Panc1 (cell line): ENCODE measurements at regions of chr5 and their contacts with region 1.

Region 1: GRCh38 chr5:27290172-27290571 is 251.8 kb upstream of the CDH9 start:
- DNase-seq: no peak
- ATAC-seq: no peak
- H3K4me3 ChIP-seq: no peak overlapping the region
- H3K27ac ChIP-seq: no peak overlapping the region
- H3K4me1 ChIP-seq: no peaks in the 10 kb centered on the region
- H3K27me3 ChIP-seq: no peaks in the 10 kb centered on the region
- CTCF ChIP-seq: no peak

Region 2: DNA sequence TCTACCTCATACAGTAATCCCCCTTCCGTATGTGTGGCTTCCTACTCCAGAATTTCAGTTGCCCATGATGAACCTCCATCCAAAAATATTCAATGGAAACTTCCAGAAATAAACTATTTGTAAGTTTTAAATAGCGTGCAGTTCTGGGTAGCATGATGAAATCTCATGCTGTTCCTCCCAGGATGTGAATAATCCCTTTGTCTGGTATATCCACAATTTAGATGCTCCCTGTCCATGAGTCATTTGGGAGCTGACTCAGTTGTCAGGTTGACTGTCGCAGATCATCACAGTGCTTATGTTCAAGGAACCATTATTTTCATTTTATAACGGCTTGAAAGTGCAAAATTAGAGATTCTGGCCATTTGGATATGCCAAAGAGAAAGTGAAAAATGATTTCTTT is 38.3 kb after region 1 on chr5:
- CTCF ChIA-PET with region 1: interaction called, 11 read pairs
- POLR2A ChIA-PET with region 1: no interaction called
- in situ Hi-C with region 1: no loop called
- intact Hi-C with region 1: no loop called
- DNase-seq: no peak
- ATAC-seq: no peak
- H3K4me3 ChIP-seq: no peak overlapping the region
- H3K27ac ChIP-seq: no peak overlapping the region
- H3K4me1 ChIP-seq: no peaks in the 10 kb centered on the region
- H3K27me3 ChIP-seq: no peaks in the 10 kb centered on the region
- CTCF ChIP-seq: no peak

Region 3: GRCh38 chr5:27578280-27578679 is 288.1 kb after region 1 on chr5:
- CTCF ChIA-PET with region 1: no interaction called
- POLR2A ChIA-PET with region 1: no interaction called
- in situ Hi-C with region 1: no loop called
- intact Hi-C with region 1: no loop called
- DNase-seq: no peak
- ATAC-seq: no peak
- H3K4me3 ChIP-seq: no peak overlapping the region
- H3K27ac ChIP-seq: no peak overlapping the region
- H3K4me1 ChIP-seq: no peaks in the 10 kb centered on the region
- H3K27me3 ChIP-seq: no peaks in the 10 kb centered on the region
- CTCF ChIP-seq: no peak

Region 4: GRCh38 chr5:27962191-27962590 is 672.0 kb after region 1 on chr5:
- CTCF ChIA-PET with region 1: no interaction called
- POLR2A ChIA-PET with region 1: no interaction called
- in situ Hi-C with region 1: no loop called
- intact Hi-C with region 1: no loop called
- DNase-seq: no peak
- ATAC-seq: no peak
- H3K4me3 ChIP-seq: no peak overlapping the region
- H3K27ac ChIP-seq: no peak overlapping the region
- H3K4me1 ChIP-seq: no peaks in the 10 kb centered on the region
- H3K27me3 ChIP-seq: no peaks in the 10 kb centered on the region
- CTCF ChIP-seq: no peak